ENCODE measurements at regions of chr17 and their contacts with region 1.

Region 1: DNA sequence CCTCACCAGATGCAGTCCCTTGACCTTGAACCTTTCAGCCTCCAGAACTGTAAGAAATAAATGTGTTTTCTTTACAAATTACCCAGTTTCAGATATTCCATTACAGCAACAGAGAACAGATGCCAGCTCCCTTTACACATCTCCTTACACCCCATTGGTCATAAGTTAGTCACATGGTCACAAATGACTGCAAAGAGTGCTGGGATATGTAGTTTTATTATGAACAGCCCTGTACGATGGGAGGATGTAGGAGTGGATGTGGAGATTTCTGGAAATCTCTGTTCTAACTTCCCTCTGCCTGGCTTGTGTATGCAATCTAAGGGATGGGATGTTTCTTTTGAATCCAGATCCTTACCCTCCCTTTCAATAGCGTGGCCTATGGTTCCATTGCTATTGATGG is 13.3 kb upstream of the RPL38 start:
- DNase-seq: no peak
- H3K4me3 ChIP-seq: no peak overlapping the region
- CTCF ChIP-seq: no peak

Region 2: GRCh38 chr17:74080656-74081582 is 109.3 kb before region 1 on chr17:
- CTCF ChIA-PET with region 1: no interaction called
- POLR2A ChIA-PET with region 1: no interaction called
- DNase-seq: no peak
- H3K4me3 ChIP-seq: no peak overlapping the region
- CTCF ChIP-seq: no peak

Region 3: GRCh38 chr17:74203439-74204240 is 13.5 kb after region 1 on chr17 and contains the start of gene RPL38:
- CTCF ChIA-PET with region 1: interaction called, 138 read pairs
- POLR2A ChIA-PET with region 1: interaction called, 5 read pairs
- DNase-seq: peak; percentile 85
- H3K4me3 ChIP-seq: peak within 1 kb of the TSS; percentile 97
- CTCF ChIP-seq: peak; percentile 99

Region 4: GRCh38 chr17:74305865-74306654 is 115.9 kb after region 1 on chr17:
- CTCF ChIA-PET with region 1: no interaction called
- POLR2A ChIA-PET with region 1: no interaction called
- DNase-seq: no peak
- H3K4me3 ChIP-seq: no peak overlapping the region
- CTCF ChIP-seq: no peak

Region 5: GRCh38 chr17:74430706-74431567 is 240.8 kb after region 1 on chr17:
- CTCF ChIA-PET with region 1: no interaction called
- POLR2A ChIA-PET with region 1: no interaction called
- DNase-seq: no peak
- H3K4me3 ChIP-seq: peak overlapping the region; percentile 27
- CTCF ChIP-seq: no peak